ENCODE measurements at regions of chr21 and their contacts with region 1.

Region 1: DNA sequence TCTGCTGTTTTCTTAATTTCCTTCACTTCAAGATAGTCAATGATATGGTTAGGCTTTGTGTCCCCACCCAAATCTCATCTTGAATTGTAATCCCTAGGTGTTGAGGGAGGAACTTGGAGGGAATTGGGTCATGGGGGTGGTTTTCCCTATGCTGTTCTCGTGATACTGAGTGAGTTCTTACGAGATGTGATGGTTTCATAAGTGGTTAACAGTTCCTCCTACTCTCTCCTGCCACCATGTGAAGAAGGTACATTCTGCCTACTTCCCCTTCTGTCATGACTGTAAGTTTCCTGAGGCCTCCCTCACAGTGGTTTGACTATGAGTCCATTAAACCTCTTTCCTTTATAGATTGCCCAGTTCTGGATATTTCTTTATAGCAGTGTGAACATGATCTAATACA is 74.0 kb upstream of the SAMSN1 start:
- DNase-seq: no peak
- H3K4me3 Mint-ChIP-seq: no peak overlapping the region
- H3K27ac Mint-ChIP-seq: peak overlapping the region; percentile 73
- H3K4me1 Mint-ChIP-seq: peaks cover 25% of the 10 kb centered on the region
- H3K27me3 Mint-ChIP-seq: no peaks in the 10 kb centered on the region

Region 2: GRCh38 chr21:14572204-14572780 is 47.9 kb before region 1 on chr21:
- intact Hi-C with region 1: loop called (anchors 5 kb)
- DNase-seq: no peak
- H3K4me3 Mint-ChIP-seq: peak overlapping the region; percentile 64
- H3K27ac Mint-ChIP-seq: peak overlapping the region; percentile 80
- H3K4me1 Mint-ChIP-seq: peaks cover 44% of the 10 kb centered on the region
- H3K27me3 Mint-ChIP-seq: no peaks in the 10 kb centered on the region

Region 3: DNA sequence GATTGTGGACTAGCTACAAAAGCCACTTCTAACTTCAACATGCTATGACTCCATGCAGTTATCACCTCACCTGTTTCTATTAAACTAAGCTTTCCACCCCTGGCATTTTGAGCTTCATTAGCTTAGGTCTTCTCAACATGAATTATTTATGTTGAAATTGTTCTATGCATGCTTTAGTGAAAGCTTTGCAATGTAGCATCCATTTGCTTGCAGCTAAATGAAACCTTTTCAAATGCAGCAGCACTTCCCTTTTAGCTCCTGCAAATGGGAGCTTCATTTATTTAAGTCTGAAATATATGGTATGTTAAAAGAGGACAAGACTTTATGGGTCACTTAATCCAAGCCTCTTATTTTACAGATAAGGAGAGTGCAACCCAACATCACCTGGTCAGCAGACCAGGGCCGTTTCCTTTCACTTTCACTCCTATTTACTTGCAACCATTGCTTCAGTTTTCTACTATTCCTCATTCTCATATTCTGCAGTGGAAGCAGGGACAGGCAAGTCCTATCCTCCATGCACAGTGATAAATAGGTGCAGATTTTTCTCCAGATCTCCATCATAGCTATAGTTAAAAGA is 17.7 kb before region 1 on chr21:
- intact Hi-C with region 1: loop called (anchors 2 kb)
- DNase-seq: no peak
- H3K4me3 Mint-ChIP-seq: peak overlapping the region; percentile 67
- H3K27ac Mint-ChIP-seq: peak overlapping the region; percentile 42
- H3K4me1 Mint-ChIP-seq: peaks cover 29% of the 10 kb centered on the region
- H3K27me3 Mint-ChIP-seq: no peaks in the 10 kb centered on the region